Endothelial cell of umbilical vein (primary cell): ENCODE measurements at regions of chr2 and their contacts with region 1.

Region 1: GRCh38 chr2:135004005-135004746 is 43.1 kb downstream of the MAP3K19 start:
- DNase-seq: peak; percentile 66
- H3K4me3 ChIP-seq: no peak overlapping the region
- H3K27ac ChIP-seq: no peak overlapping the region
- H3K4me1 ChIP-seq: no peaks in the 10 kb centered on the region
- H3K27me3 ChIP-seq: peaks cover 13 to 18% of the 10 kb centered on the region in 2 experiments
- CTCF ChIP-seq: peak; percentile 95 to 96
- POLR2A ChIP-seq: no peak

Region 2: DNA sequence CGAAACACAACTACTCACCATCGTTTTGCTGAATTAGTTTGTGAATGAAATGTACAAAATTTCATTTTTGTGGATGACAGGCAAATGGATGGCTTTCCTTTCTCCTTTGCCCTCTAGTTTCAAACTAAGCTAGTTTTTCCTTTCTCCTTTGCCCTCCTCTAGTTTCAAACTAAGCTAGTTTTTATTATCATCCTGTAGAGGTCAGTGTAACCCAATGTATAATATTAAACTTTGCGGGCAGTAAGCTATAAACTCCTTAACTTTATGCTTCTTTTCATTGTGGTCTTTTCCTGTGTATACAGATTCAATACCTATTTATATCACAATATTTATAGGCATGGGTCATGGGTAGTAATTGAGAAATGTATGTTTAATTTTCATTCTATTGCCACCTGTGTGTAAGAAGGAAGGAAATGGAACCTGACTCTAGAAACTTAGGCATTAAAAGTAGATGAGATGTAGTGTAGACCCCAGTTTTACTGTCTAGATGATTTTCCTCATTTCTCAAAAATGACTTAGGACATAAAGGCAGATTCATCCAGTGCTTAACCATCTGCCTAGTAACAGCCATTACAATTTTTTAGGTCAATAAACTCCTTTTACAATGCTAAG is 15.1 kb before region 1 on chr2:
- CTCF ChIA-PET with region 1: interaction called, 54 read pairs
- POLR2A ChIA-PET with region 1: no interaction called
- dilution Hi-C with region 1: no loop called
- intact Hi-C with region 1: no loop called
- DNase-seq: peak; percentile 34
- H3K4me3 ChIP-seq: no peak overlapping the region
- H3K27ac ChIP-seq: no peak overlapping the region
- H3K4me1 ChIP-seq: no peaks in the 10 kb centered on the region
- H3K27me3 ChIP-seq: peaks cover 10 to 31% of the 10 kb centered on the region in 2 experiments
- CTCF ChIP-seq: peak; percentile 15 to 33
- POLR2A ChIP-seq: no peak

Region 3: GRCh38 chr2:135164441-135164840 is 160.3 kb after region 1 on chr2:
- CTCF ChIA-PET with region 1: interaction called, 3 read pairs
- POLR2A ChIA-PET with region 1: no interaction called
- dilution Hi-C with region 1: no loop called
- intact Hi-C with region 1: loop called (anchors 10 kb)
- DNase-seq: no peak
- H3K4me3 ChIP-seq: no peak overlapping the region
- H3K27ac ChIP-seq: no peak overlapping the region
- H3K4me1 ChIP-seq: no peaks in the 10 kb centered on the region
- H3K27me3 ChIP-seq: no peaks in the 10 kb centered on the region
- CTCF ChIP-seq: no peak
- POLR2A ChIP-seq: no peak

Region 4: DNA sequence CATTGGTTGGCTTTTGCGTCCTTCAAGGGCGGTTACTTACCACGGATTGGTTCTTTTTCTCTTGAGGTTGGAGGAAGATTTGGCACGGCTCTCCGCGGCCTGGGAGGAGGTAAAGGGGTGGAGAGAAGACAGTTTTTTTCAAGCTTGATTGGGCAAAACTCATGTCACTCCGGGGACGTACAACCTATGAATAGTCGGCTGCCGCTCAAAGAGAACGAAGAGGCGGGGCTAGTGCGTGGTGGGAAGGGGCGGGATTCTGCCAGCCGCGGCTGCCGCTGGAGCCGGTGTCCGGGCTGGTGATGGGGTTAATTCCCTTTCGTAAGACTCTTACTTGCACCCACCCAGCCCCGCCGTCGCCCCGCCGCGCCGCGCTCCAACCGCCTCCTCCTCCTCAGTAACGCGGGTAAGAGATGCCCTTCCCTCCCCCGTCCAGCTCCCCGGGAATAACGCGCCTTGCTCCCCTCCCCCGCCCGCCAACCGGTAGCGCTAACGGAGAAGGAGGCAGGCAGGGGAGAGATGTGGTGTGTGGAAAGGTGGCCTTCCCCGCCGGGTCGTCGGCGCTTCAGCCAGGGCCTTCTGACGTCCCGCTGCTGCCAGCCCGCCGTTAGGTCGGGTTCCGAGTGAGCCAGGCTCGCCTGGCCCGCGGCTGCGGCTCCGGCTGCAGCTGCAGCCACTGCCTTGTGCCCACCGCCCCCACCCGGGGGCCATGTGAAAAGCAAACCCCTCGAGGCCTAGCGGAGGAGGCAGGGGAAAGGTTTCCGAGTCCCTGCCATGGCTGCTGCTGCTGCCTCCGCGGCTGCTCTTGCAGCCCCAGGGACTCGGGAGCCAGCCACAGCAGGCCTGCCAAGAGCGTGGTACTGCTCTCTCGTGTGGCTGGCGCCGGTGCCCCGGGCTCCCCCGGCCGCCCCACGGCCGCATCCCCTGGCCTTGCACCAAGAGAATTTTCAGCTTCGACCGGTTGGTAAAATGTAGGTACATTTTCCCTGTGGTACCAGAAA is 527.4 kb after region 1 on chr2 and contains the start of gene R3HDM1:
- CTCF ChIA-PET with region 1: interaction called, 6 read pairs
- POLR2A ChIA-PET with region 1: no interaction called
- dilution Hi-C with region 1: no loop called
- intact Hi-C with region 1: loop called (anchors 1 kb)
- DNase-seq: peak; percentile 100
- H3K4me3 ChIP-seq: peak within 1 kb of the TSS; percentile 77 to 92 (median 88)
- H3K27ac ChIP-seq: peak within 1 kb of the TSS; percentile 93
- H3K4me1 ChIP-seq: peaks cover 7% of the 10 kb centered on the region
- H3K27me3 ChIP-seq: no peaks in the 10 kb centered on the region
- CTCF ChIP-seq: peak in 1 of 2 donors; percentile 15
- POLR2A ChIP-seq: peak; percentile 75
- total RNA-seq, gene R3HDM1: 36.2 and 36.6 TPM in 2 replicates

Region 5: DNA sequence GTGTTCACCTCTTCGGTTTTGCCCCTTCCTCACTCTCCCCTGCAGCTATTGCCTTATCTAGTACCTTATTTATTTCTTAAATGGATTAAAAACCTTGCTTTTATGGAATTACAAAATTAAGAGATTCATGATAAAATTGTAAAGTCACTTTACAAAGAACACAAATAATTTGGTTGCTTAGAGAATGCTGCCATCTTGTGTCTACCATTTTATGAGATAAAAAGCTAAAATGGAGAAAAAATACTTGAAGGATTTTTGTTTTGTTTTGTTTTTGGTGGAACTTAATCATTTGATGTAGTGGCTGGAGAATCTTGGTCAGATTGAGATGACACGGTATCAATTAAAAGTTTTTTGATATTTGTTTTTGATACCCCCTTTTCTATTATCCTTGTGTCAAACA is 596.7 kb after region 1 on chr2:
- CTCF ChIA-PET with region 1: interaction called, 63 read pairs
- POLR2A ChIA-PET with region 1: no interaction called
- dilution Hi-C with region 1: no loop called
- intact Hi-C with region 1: loop called (anchors 1 kb)
- DNase-seq: peak; percentile 9
- H3K4me3 ChIP-seq: no peak overlapping the region
- H3K27ac ChIP-seq: no peak overlapping the region
- H3K4me1 ChIP-seq: no peaks in the 10 kb centered on the region
- H3K27me3 ChIP-seq: no peaks in the 10 kb centered on the region
- CTCF ChIP-seq: no peak
- POLR2A ChIP-seq: no peak

Region 6: GRCh38 chr2:135797497-135798274 is 793.5 kb after region 1 on chr2:
- CTCF ChIA-PET with region 1: interaction called, 88 read pairs
- POLR2A ChIA-PET with region 1: no interaction called
- dilution Hi-C with region 1: no loop called
- intact Hi-C with region 1: loop called (anchors 1 kb)
- DNase-seq: peak; percentile 71
- H3K4me3 ChIP-seq: no peak overlapping the region
- H3K27ac ChIP-seq: no peak overlapping the region
- H3K4me1 ChIP-seq: no peaks in the 10 kb centered on the region
- H3K27me3 ChIP-seq: no peaks in the 10 kb centered on the region
- CTCF ChIP-seq: peak; percentile 95 to 96
- POLR2A ChIP-seq: no peak